Gastrocnemius medialis (tissue), 4 donors: ENCODE measurements at regions of chr7 and their contacts with region 1.

Region 1: GRCh38 chr7:87059525-87060287 is at the start of gene ELAPOR2:
- DNase-seq: peak; percentile 27 to 54
- ATAC-seq: peak; percentile 83 to 89
- H3K4me3 ChIP-seq: peak within 1 kb of the TSS; percentile 44 to 74 (median 65)
- H3K27ac ChIP-seq: peak within 1 kb of the TSS; percentile 58 to 72 (median 64)
- H3K4me1 ChIP-seq: peaks cover 9 to 10% of the 10 kb centered on the region in 2 donors
- H3K27me3 ChIP-seq: peaks cover 0 to 3% (median 0%) of the 10 kb centered on the region in 3 donors
- CTCF ChIP-seq: peak; percentile 26 to 60 (median 50)
- POLR2A ChIP-seq: peak; percentile 51 to 65
- total RNA-seq, gene ELAPOR2: 2.3 to 10.5 (median 3.8) TPM

Region 2: DNA sequence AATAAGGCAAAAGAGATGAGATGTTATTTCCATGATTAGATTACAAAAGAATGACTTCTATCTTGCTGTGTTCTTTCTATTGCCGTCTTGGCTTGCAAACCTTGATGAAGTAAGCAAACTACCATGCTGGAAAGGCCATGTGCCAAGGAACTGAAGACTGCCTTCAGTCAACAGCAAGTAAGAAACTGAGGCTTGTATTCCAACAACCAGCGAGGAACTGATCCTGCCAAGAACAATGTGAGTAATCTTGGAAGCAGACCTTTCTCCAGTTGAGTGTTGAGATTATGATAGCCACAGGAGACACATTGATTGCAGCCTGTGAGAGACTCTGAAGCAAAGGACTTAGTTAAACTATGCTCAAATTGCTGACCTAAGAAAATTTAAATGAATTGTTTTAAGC is 580.6 kb before region 1 on chr7:
- in situ Hi-C with region 1: no loop called
- intact Hi-C with region 1: no loop called
- DNase-seq: peak; percentile 21 to 24
- ATAC-seq: peak in 1 of 2 donors; percentile 47
- H3K4me3 ChIP-seq: no peak overlapping the region
- H3K27ac ChIP-seq: no peak overlapping the region
- H3K4me1 ChIP-seq: no peaks in the 10 kb centered on the region
- H3K27me3 ChIP-seq: no peaks in the 10 kb centered on the region
- CTCF ChIP-seq: no peak
- POLR2A ChIP-seq: no peak

Region 3: DNA sequence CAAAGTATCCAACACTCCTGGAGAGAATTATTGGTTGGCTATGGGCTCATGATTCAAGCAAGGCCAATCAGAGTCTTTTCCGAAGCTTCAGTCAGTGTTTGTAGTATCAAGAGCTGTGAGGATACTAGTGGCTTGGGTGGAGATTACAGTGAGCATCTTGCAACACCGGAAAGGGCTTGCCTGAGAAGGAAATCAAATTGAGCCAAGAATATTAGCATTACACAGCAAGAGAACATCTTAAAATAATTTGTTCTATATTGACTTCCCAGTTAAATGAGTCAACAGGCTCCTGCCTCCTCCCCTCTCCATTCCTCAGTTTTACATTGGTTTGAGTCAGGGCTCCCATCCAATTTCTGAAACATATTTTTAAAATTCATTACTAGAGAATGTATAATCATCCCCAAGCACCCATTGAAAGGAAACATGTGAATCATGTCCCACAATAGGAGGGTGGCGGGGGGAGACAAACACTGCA is 127.6 kb before region 1 on chr7:
- in situ Hi-C with region 1: loop called in 1 of 4 experiments (anchors 10 kb)
- intact Hi-C with region 1: loop called (anchors 5 kb)
- DNase-seq: peak; percentile 5 to 19
- ATAC-seq: peak; percentile 88 to 95
- H3K4me3 ChIP-seq: no peak overlapping the region
- H3K27ac ChIP-seq: peak overlapping the region; percentile 56 to 67 (median 64)
- H3K4me1 ChIP-seq: peaks cover 0 to 4% of the 10 kb centered on the region in 2 donors
- H3K27me3 ChIP-seq: no peaks in the 10 kb centered on the region
- CTCF ChIP-seq: no peak
- POLR2A ChIP-seq: no peak

Region 4: GRCh38 chr7:86949052-86949778 is 110.5 kb before region 1 on chr7:
- in situ Hi-C with region 1: no loop called
- intact Hi-C with region 1: no loop called
- DNase-seq: no peak
- ATAC-seq: no peak
- H3K4me3 ChIP-seq: no peak overlapping the region
- H3K27ac ChIP-seq: no peak overlapping the region
- H3K4me1 ChIP-seq: no peaks in the 10 kb centered on the region
- H3K27me3 ChIP-seq: no peaks in the 10 kb centered on the region
- CTCF ChIP-seq: no peak
- POLR2A ChIP-seq: no peak

Region 5: GRCh38 chr7:87003872-87004798 is 55.6 kb before region 1 on chr7:
- in situ Hi-C with region 1: no loop called
- intact Hi-C with region 1: loop called (anchors 5 kb)
- DNase-seq: no peak
- ATAC-seq: no peak
- H3K4me3 ChIP-seq: no peak overlapping the region
- H3K27ac ChIP-seq: no peak overlapping the region
- H3K4me1 ChIP-seq: peaks cover 11 to 23% of the 10 kb centered on the region in 2 donors
- H3K27me3 ChIP-seq: no peaks in the 10 kb centered on the region
- CTCF ChIP-seq: no peak
- POLR2A ChIP-seq: no peak

Region 6: DNA sequence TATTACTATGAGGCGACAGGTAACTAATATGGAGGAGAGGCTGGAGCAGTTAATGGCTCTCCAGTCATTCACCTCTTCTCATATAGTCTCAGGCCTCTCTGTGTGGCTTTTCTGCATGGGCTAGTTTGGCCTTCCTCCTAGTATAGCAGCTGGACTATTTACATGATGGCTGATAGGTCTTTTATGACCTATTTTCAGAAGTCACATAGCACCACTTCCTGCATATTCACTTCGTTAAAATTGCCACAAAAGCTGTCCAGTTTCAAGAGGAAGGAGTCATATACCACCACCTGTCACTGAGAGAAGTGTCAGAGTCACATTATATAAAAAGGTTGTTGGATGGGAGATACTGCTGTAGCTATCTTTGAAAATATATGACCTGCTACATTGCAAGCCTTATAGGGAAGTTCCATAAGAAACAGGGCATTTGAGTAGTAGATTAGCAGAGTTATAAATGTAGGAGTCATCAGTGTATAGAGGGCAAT is 84.5 kb after region 1 on chr7:
- in situ Hi-C with region 1: no loop called
- intact Hi-C with region 1: no loop called
- DNase-seq: no peak
- ATAC-seq: no peak
- H3K4me3 ChIP-seq: no peak overlapping the region
- H3K27ac ChIP-seq: no peak overlapping the region
- H3K4me1 ChIP-seq: peaks cover 0 to 7% of the 10 kb centered on the region in 2 donors
- H3K27me3 ChIP-seq: no peaks in the 10 kb centered on the region
- CTCF ChIP-seq: no peak
- POLR2A ChIP-seq: no peak

Region 7: DNA sequence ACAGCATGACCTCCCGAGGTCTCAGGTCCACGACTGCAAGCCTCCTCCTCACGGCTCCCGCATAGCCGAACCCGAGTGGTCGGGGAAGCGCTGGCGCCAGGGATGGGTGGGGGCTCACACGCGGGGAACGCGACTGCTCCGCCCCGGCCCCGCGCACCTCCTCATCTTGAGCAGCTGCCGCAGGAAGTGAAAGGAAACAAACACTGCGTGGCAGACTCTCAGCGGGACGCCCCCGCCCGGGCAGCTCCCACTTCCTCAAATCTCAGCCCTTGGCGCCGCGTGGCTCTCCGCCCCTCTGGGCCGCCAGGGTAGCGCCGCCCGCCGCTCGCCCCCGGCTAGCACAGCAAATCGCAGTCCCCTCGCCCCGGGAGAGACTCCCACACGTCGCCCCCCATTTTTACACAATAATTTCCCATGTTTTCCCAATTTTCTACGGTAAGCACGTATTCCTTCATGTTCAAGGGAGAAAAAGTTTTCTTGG is 159.9 kb after region 1 on chr7 and contains the start of gene TMEM243:
- in situ Hi-C with region 1: no loop called
- intact Hi-C with region 1: loop called (anchors 5 kb)
- DNase-seq: peak; percentile 43 to 48
- ATAC-seq: peak; percentile 57 to 62
- H3K4me3 ChIP-seq: peak within 1 kb of the TSS; percentile 80 to 89 (median 81)
- H3K27ac ChIP-seq: peak within 1 kb of the TSS; percentile 67 to 78 (median 72)
- H3K4me1 ChIP-seq: peaks cover 10% of the 10 kb centered on the region in 2 donors
- H3K27me3 ChIP-seq: no peaks in the 10 kb centered on the region
- CTCF ChIP-seq: peak in 1 of 5 experiments; percentile 30
- POLR2A ChIP-seq: peak; percentile 21 to 48
- total RNA-seq, gene TMEM243: 2.8 to 6.5 (median 4.1) TPM

Region 8: GRCh38 chr7:87231256-87231655 is 171.6 kb after region 1 on chr7:
- in situ Hi-C with region 1: no loop called
- intact Hi-C with region 1: loop called (anchors 5 kb)
- DNase-seq: no peak
- ATAC-seq: no peak
- H3K4me3 ChIP-seq: no peak overlapping the region
- H3K27ac ChIP-seq: no peak overlapping the region
- H3K4me1 ChIP-seq: peaks cover 4 to 7% of the 10 kb centered on the region in 2 donors
- H3K27me3 ChIP-seq: no peaks in the 10 kb centered on the region
- CTCF ChIP-seq: no peak
- POLR2A ChIP-seq: no peak